Activated naive CD4-positive, alpha-beta T cell treated with anti-CD3 and anti-CD28 coated beads for 36 hours (primary cell): ENCODE measurements at regions of chr9 and their contacts with region 1.

Region 1: GRCh38 chr9:124202447-124202971 is 55.2 kb upstream of the NEK6 start:
- DNase-seq: peak; percentile 94
- H3K4me3 Mint-ChIP-seq: peak overlapping the region; percentile 25
- H3K27ac Mint-ChIP-seq: peak overlapping the region; percentile 84
- H3K4me1 Mint-ChIP-seq: peaks cover 32% of the 10 kb centered on the region
- H3K27me3 Mint-ChIP-seq: no peaks in the 10 kb centered on the region

Region 2: DNA sequence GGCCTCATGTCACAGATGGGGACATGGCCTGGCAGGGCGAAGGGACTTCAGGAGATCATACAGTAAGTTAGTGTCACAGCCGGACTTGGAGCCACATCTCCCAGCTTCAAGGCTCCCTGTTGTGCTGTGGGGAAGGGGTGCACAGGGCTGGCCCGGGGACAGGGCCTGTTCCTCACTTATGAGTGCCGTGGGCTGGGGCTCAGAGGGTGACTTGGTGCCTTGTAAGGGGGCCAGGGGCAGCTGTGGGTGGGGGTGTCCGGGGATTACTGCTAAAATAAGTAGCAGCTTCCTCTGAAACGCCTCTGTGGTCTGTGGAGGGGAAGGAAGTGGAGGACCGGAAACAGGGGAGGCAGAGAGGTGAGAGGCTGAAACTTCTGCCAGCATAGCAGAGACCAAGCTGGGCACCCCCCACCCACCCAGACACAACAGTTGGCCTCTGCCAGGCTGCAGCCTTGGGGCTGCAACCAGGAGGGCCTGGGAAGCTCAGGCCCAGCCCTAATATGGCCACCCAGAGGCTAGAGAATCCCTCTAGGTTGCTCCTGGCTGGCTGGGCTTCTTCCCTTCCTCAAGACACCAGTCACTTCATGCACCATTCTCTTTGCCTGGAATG is 14.2 kb after region 1 on chr9:
- CTCF ChIA-PET with region 1: no interaction called
- intact Hi-C with region 1: loop called (anchors 1 kb)
- DNase-seq: peak; percentile 80
- H3K4me3 Mint-ChIP-seq: no peak overlapping the region
- H3K27ac Mint-ChIP-seq: peak overlapping the region; percentile 51
- H3K4me1 Mint-ChIP-seq: peaks cover 34% of the 10 kb centered on the region
- H3K27me3 Mint-ChIP-seq: no peaks in the 10 kb centered on the region